Activated CD4-positive, alpha-beta memory T cell treated with anti-CD3 and anti-CD28 coated beads for 36 hours (primary cell): ENCODE measurements at regions of chr12 and their contacts with region 1.

Region 1: GRCh38 chr12:47032644-47033043 is 46.8 kb upstream of the PCED1B start:
- DNase-seq: no peak
- H3K4me3 Mint-ChIP-seq: no peak overlapping the region
- H3K27ac Mint-ChIP-seq: no peak overlapping the region
- H3K4me1 Mint-ChIP-seq: peaks cover 37% of the 10 kb centered on the region
- H3K27me3 Mint-ChIP-seq: no peaks in the 10 kb centered on the region

Region 2: DNA sequence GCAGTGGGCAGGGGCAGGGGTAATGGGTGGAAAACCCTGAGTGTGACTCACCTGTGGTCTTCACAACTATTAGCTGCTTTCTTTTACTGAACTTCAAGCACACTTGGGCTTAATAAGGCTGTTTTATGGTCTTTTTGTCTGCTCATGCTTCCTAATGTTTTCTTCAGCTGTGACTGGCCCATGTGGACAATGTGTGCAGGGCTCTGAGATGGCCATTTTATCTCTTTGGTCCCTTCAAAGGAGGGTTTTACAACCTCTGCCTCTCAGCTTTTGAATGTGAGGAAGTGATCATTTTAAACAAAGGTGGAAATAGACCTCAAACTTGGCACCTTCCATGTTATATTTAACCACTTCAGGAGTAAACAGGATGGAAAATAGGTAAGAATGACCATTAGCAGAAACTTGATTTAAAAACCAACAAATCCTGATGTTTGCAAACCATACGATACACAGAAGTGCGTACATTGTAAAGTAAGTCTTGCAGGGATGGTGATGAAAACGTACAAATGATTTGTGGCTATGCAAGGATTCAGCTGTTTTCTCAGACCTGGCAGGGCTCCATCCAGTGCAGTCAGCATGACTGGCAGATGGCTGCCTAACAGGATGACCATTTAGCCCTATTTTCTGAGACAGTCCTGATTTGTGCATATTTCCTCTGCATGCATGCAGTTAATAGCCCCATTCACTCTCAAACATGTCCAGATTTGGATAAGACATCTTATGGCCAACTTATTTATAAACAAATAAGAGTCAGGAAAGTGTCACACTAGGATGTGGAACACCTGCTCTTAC is 310.1 kb before region 1 on chr12:
- CTCF ChIA-PET with region 1: no interaction called
- POLR2A ChIA-PET with region 1: no interaction called
- intact Hi-C with region 1: no loop called
- DNase-seq: no peak
- H3K4me3 Mint-ChIP-seq: no peak overlapping the region
- H3K27ac Mint-ChIP-seq: no peak overlapping the region
- H3K4me1 Mint-ChIP-seq: peaks cover 3% of the 10 kb centered on the region
- H3K27me3 Mint-ChIP-seq: no peaks in the 10 kb centered on the region

Region 3: GRCh38 chr12:47021298-47021697 is 11.3 kb before region 1 on chr12:
- CTCF ChIA-PET with region 1: interaction called, 34 read pairs
- POLR2A ChIA-PET with region 1: no interaction called
- intact Hi-C with region 1: no loop called
- DNase-seq: no peak
- H3K4me3 Mint-ChIP-seq: no peak overlapping the region
- H3K27ac Mint-ChIP-seq: no peak overlapping the region
- H3K4me1 Mint-ChIP-seq: peaks cover 7% of the 10 kb centered on the region
- H3K27me3 Mint-ChIP-seq: peaks cover 23% of the 10 kb centered on the region

Region 4: DNA sequence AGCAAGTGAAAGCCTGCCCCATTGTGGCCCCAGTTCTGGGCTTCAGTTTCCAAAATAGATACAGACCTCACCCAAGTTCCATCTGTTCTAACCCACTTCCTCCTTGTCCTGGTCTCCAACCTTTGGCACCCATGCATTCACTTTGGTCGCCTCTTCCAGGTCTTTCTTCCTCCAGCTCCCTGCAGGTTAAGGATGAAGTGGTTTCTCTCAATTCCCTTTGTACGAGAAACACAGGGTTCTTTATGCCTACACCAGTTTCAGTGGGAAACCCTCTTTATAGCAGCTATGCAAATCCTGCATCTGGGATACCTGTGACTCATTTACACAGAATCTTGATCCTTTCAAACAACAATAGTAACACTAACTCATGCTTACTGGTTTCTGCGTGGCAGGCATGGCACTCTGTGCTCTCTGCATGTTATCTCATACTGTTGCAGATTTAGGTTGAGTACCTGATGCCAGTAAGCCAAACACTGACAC is 157.7 kb after region 1 on chr12:
- CTCF ChIA-PET with region 1: interaction called, 12 read pairs
- POLR2A ChIA-PET with region 1: no interaction called
- intact Hi-C with region 1: loop called (anchors 2 kb)
- DNase-seq: peak; percentile 63
- H3K4me3 Mint-ChIP-seq: peak overlapping the region; percentile 17
- H3K27ac Mint-ChIP-seq: peak overlapping the region; percentile 80
- H3K4me1 Mint-ChIP-seq: peaks cover 82% of the 10 kb centered on the region
- H3K27me3 Mint-ChIP-seq: no peaks in the 10 kb centered on the region

Region 5: GRCh38 chr12:47216150-47216677 is 183.6 kb after region 1 on chr12:
- CTCF ChIA-PET with region 1: interaction called, 12 read pairs
- POLR2A ChIA-PET with region 1: interaction called, 3 read pairs
- intact Hi-C with region 1: no loop called
- DNase-seq: peak; percentile 87
- H3K4me3 Mint-ChIP-seq: peak overlapping the region; percentile 85
- H3K27ac Mint-ChIP-seq: peak overlapping the region; percentile 96
- H3K4me1 Mint-ChIP-seq: peaks cover 19% of the 10 kb centered on the region
- H3K27me3 Mint-ChIP-seq: no peaks in the 10 kb centered on the region

Region 6: GRCh38 chr12:47636908-47637780 is 604.5 kb after region 1 on chr12:
- CTCF ChIA-PET with region 1: interaction called, 21 read pairs
- POLR2A ChIA-PET with region 1: no interaction called
- intact Hi-C with region 1: no loop called
- DNase-seq: peak; percentile 71
- H3K4me3 Mint-ChIP-seq: no peak overlapping the region
- H3K27ac Mint-ChIP-seq: peak overlapping the region; percentile 18
- H3K4me1 Mint-ChIP-seq: peaks cover 6% of the 10 kb centered on the region
- H3K27me3 Mint-ChIP-seq: no peaks in the 10 kb centered on the region

Region 7: GRCh38 chr12:47686645-47687240 is 654.1 kb after region 1 on chr12:
- CTCF ChIA-PET with region 1: interaction called, 22 read pairs
- POLR2A ChIA-PET with region 1: no interaction called
- intact Hi-C with region 1: loop called (anchors 2 kb)
- DNase-seq: no peak
- H3K4me3 Mint-ChIP-seq: no peak overlapping the region
- H3K27ac Mint-ChIP-seq: no peak overlapping the region
- H3K4me1 Mint-ChIP-seq: peaks cover 6% of the 10 kb centered on the region
- H3K27me3 Mint-ChIP-seq: no peaks in the 10 kb centered on the region